PC-3 (cell line): ENCODE measurements at regions of chrX and their contacts with region 1.

Region 1: DNA sequence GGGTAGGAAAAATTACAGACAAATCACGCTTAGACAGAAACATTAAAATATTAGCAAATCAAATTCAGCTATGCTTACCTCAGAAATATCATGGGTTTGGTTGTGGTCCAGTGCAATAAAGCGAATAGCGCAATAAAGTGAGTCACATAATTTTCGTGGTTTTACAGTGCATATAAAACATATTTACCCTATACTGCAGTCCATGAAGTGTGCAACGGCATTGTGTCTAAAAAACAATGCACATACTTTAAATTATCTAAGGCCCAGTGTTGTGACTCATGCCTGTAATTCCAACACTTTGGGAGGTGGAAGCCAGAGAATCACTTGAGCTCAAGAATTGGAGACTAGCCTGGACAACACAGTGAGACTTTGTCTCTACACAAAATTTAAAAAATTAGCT is 195.7 kb upstream of the IL1RAPL1 start:
- DNase-seq: peak; percentile 88
- ATAC-seq: peak; percentile 98
- H3K4me3 ChIP-seq: no peak overlapping the region
- H3K27ac ChIP-seq: peak overlapping the region; percentile 39; the same call in 1 of the 2 replicates
- H3K4me1 ChIP-seq: no peaks in the 10 kb centered on the region
- H3K27me3 ChIP-seq: no peaks in the 10 kb centered on the region
- CTCF ChIP-seq: no peak

Region 2: DNA sequence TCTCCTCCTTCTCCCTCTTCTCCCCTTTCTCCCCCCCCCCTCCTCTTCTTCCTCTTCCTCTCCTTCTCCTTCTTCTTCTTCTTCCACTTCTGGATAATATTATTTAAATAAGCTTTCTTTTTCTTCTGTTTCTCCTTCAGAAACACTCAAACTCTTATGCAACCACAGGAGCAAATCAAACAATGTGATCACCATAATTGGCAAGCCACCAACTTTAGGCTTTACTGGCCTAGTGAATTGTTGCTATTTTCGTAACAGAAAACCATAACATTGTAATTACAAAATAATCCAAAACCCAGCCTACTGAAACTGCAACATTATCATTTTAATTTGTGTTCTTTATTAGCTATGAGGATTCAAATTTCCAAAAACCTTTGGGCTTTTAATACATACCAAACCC is 424.6 kb before region 1 on chrX:
- CTCF ChIA-PET with region 1: no interaction called
- POLR2A ChIA-PET with region 1: no interaction called
- intact Hi-C with region 1: loop called (anchors 10 kb)
- DNase-seq: peak; percentile 55
- ATAC-seq: no peak
- H3K4me3 ChIP-seq: no peak overlapping the region
- H3K27ac ChIP-seq: peak overlapping the region; percentile 67
- H3K4me1 ChIP-seq: peaks cover 26% of the 10 kb centered on the region
- H3K27me3 ChIP-seq: no peaks in the 10 kb centered on the region
- CTCF ChIP-seq: no peak

Region 3: DNA sequence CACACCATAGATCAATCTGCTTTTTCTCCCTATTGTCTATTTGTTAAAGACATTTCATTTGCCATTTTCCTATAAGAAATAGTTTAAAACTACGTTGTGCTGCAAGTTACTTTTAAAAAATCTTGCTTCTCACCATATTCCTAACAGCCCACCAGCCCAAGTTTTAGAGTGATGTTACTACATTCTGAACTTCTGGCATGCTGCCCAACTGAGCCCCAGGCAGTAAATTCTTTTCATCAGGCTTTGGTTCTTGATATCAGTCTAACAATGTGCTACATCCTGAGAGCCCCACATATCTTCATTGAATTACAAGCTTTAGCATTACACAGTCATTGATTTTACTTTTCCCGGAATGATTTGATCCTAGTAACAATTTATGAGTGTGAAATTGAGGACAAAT is 88.0 kb before region 1 on chrX:
- CTCF ChIA-PET with region 1: no interaction called
- POLR2A ChIA-PET with region 1: no interaction called
- intact Hi-C with region 1: loop called (anchors 2 kb)
- DNase-seq: no peak
- ATAC-seq: no peak
- H3K4me3 ChIP-seq: no peak overlapping the region
- H3K27ac ChIP-seq: no peak overlapping the region
- H3K4me1 ChIP-seq: no peaks in the 10 kb centered on the region
- H3K27me3 ChIP-seq: no peaks in the 10 kb centered on the region
- CTCF ChIP-seq: no peak

Region 4: DNA sequence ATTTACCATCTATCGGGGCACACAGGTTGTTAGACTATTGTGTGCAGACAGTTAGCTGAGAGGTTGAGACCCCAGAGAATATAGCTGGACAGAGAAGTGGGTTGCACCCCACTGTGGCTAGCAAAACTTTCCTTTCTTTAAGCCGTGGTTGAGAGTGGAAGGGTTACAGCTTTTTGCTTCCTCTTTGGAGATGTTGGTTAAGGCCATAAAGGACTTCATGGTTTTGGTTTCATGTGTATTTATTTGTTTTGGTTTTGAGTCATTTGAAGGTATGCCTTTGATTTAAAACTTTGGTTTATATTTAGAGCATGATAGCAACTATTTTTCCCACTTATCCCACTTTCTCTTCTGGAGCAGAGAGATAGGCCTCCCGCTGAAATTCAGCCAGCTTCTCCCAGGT is 78.6 kb before region 1 on chrX:
- CTCF ChIA-PET with region 1: no interaction called
- POLR2A ChIA-PET with region 1: no interaction called
- intact Hi-C with region 1: loop called (anchors 2 kb)
- DNase-seq: peak; percentile 61
- ATAC-seq: peak; percentile 78
- H3K4me3 ChIP-seq: 0 out of 2 replicates have a peak overlapping the region, but pooled peaks have one; percentile 23
- H3K27ac ChIP-seq: peak overlapping the region; percentile 88
- H3K4me1 ChIP-seq: peaks cover 26% of the 10 kb centered on the region
- H3K27me3 ChIP-seq: no peaks in the 10 kb centered on the region
- CTCF ChIP-seq: no peak

Region 5: GRCh38 chrX:28498658-28499057 is 107.1 kb after region 1 on chrX:
- CTCF ChIA-PET with region 1: no interaction called
- POLR2A ChIA-PET with region 1: no interaction called
- intact Hi-C with region 1: no loop called
- DNase-seq: peak; percentile 45
- ATAC-seq: peak; percentile 73
- H3K4me3 ChIP-seq: no peak overlapping the region
- H3K27ac ChIP-seq: peak overlapping the region; percentile 40
- H3K4me1 ChIP-seq: peaks cover 16% of the 10 kb centered on the region
- H3K27me3 ChIP-seq: no peaks in the 10 kb centered on the region
- CTCF ChIP-seq: no peak